ENCODE measurements at regions of chr10 and their contacts with region 1.

Region 1: GRCh38 chr10:15433850-15434537 is 62.9 kb upstream of the FAM171A1 start:
- DNase-seq: no peak
- H3K4me3 ChIP-seq: peak overlapping the region; percentile 57
- H3K27ac ChIP-seq: no peak overlapping the region
- H3K4me1 ChIP-seq: peaks cover 3% of the 10 kb centered on the region
- H3K27me3 ChIP-seq: peaks cover 9% of the 10 kb centered on the region
- CTCF ChIP-seq: peak; percentile 80

Region 2: GRCh38 chr10:15370212-15370855 is 63.7 kb before region 1 on chr10:
- intact Hi-C with region 1: no loop called
- DNase-seq: peak; percentile 20
- H3K4me3 ChIP-seq: peak overlapping the region; percentile 76
- H3K27ac ChIP-seq: peak overlapping the region; percentile 78
- H3K4me1 ChIP-seq: peaks cover 45% of the 10 kb centered on the region
- H3K27me3 ChIP-seq: no peaks in the 10 kb centered on the region
- CTCF ChIP-seq: no peak

Region 3: DNA sequence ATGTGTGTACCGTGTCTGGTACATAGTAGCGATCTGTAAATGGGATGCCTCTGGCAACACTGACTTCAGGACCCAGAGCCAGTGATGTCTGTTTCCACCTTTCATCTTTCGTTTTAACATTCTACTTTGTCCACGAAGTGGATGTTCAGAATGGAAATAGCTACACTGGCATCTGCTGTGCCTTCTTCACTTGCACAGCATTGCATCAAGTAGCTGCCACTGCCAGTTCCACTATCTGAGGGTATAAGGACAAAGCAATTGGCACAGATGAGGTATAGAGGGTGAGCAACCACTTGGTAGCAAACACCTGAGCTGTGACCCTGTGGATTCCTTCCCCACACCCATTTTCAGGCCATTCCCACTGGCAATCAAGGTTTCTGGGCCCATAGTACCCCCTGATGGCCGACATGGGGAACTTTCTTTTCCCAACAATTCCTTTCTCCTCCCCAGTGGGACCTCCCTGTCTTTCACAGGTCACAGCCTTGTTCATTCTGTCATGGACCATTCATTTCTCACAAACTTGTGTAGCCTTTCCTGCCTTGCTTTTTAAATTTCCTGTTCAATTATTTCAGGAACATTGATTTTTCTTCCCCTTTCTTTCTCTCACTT is 281.7 kb after region 1 on chr10:
- intact Hi-C with region 1: loop called (anchors 2 kb)
- DNase-seq: no peak
- H3K4me3 ChIP-seq: no peak overlapping the region
- H3K27ac ChIP-seq: no peak overlapping the region
- H3K4me1 ChIP-seq: peaks cover 18% of the 10 kb centered on the region
- H3K27me3 ChIP-seq: peaks cover 40% of the 10 kb centered on the region
- CTCF ChIP-seq: peak; percentile 62

Region 4: GRCh38 chr10:15824498-15824897 is 390.5 kb after region 1 on chr10:
- intact Hi-C with region 1: loop called (anchors 5 kb)
- DNase-seq: no peak
- H3K4me3 ChIP-seq: no peak overlapping the region
- H3K27ac ChIP-seq: no peak overlapping the region
- H3K4me1 ChIP-seq: peaks cover 9% of the 10 kb centered on the region
- H3K27me3 ChIP-seq: no peaks in the 10 kb centered on the region
- CTCF ChIP-seq: peak; percentile 67

Measured in left ventricle myocardium inferior (tissue), 1 donor.